Esophagus muscularis mucosa (tissue), 4 donors: ENCODE measurements at regions of chr21 and their contacts with region 1.

Region 1: DNA sequence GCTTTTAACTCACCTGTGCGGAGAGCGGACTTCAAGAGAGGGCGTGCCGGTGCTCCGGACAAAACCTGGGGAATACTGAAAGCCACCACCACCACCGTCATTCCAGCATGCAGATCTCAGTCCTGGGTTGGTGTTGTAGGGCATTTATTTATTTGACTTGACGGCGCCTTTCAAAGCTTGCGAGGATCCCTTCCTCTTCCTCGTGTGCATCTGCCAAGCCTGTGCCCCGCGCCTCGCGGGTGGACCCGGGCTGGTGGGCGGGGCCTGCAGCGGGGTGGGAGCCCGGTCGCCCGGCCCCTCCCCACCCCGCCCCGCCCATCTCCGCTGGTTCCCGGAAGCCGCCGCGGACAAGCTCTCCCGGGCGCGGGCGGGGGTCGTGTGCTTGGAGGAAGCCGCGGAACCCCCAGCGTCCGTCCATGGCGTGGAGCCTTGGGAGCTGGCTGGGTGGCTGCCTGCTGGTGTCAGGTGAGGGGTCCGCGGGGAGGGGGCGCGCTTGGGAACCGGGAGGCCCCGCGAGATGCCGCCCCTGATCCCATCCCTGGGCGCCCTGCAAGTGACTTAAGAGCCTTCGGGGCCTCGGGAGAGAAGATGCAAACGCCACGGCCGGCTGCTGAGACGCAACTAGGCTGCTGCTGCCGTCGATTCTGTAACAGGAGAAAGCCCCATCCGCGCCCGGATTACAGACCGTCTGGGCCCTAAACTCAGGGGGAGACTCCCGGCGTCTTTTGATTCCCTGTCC is at the start of gene IL10RB:
- DNase-seq: peak; percentile 94
- H3K4me3 ChIP-seq: peak within 1 kb of the TSS; percentile 80 to 89 (median 84)
- H3K27ac ChIP-seq: peak within 1 kb of the TSS; percentile 82 to 91 (median 86)
- H3K4me1 ChIP-seq: peaks cover 10 to 24% (median 23%) of the 10 kb centered on the region in 4 donors
- H3K27me3 ChIP-seq: no peaks in the 10 kb centered on the region
- CTCF ChIP-seq: no peak
- EP300 ChIP-seq: peak; percentile 10
- POLR2A ChIP-seq: peak; percentile 20
- total RNA-seq, gene IL10RB: 16.9 to 31.0 (median 20.6) TPM

Region 2: GRCh38 chr21:33036430-33037162 is 229.6 kb before region 1 on chr21:
- intact Hi-C with region 1: no loop called
- DNase-seq: no peak
- H3K4me3 ChIP-seq: no peak overlapping the region
- H3K27ac ChIP-seq: no peak overlapping the region
- H3K4me1 ChIP-seq: peaks cover 0 to 9% (median 4%) of the 10 kb centered on the region in 4 donors
- H3K27me3 ChIP-seq: peaks cover 0 to 82% (median 18%) of the 10 kb centered on the region in 4 donors
- CTCF ChIP-seq: no peak
- EP300 ChIP-seq: no peak
- POLR2A ChIP-seq: no peak

Region 3: GRCh38 chr21:33229784-33230544 is 36.3 kb before region 1 on chr21 and contains the start of gene IFNAR2:
- intact Hi-C with region 1: loop called (anchors 5 kb)
- DNase-seq: no peak
- H3K4me3 ChIP-seq: peak within 1 kb of the TSS; percentile 96 to 99 (median 98)
- H3K27ac ChIP-seq: peak within 1 kb of the TSS; percentile 94 to 99 (median 97)
- H3K4me1 ChIP-seq: peaks cover 16 to 29% (median 20%) of the 10 kb centered on the region in 4 donors
- H3K27me3 ChIP-seq: no peaks in the 10 kb centered on the region
- CTCF ChIP-seq: no peak
- EP300 ChIP-seq: peak; percentile 43
- POLR2A ChIP-seq: peak; percentile 51
- total RNA-seq, gene IFNAR2: 5.3 to 14.6 (median 10.4) TPM